HEK293 (cell line): ENCODE measurements at regions of chr5 and their contacts with region 1.

Region 1: DNA sequence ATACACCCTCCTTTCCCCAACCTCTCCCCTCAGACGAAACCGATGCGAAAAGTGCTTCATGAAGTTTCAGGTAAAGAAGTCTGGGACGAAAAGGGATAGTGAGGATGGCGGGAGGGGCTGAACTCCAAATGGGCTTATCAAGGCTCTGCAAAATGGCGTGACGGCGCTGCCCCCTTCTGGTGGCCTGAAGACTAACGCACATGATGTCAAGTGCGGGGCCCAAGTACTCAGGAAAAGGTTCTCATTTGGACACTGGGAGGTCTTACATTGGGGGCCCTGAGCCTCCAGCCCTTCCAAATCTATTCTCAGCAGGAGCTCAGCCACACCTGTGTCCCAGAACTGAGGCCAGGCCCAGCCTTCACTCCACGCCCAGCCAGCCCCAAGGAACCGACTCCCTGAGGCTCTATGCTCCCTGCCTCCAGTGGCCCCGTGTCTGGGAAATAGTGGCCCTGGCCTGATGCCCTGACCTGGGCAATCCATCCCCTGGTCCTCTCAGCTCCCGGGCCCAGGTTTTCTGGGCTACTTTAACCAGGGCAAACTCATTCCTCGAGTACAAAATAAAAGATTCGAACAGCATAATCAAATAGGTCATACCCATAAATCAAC is 119.9 kb downstream of the KCNIP1 start:
- H3K4me3 ChIP-seq: no peak overlapping the region
- H3K27ac ChIP-seq: no peak overlapping the region
- H3K4me1 ChIP-seq: no peaks in the 10 kb centered on the region
- CTCF ChIP-seq: peak; percentile 43; the same call in 1 of the 2 replicates

Region 2: GRCh38 chr5:170427672-170428236 is 195.9 kb before region 1 on chr5:
- CTCF ChIA-PET with region 1: interaction called, 85 read pairs
- POLR2A ChIA-PET with region 1: no interaction called
- H3K4me3 ChIP-seq: no peak overlapping the region
- H3K27ac ChIP-seq: no peak overlapping the region
- H3K4me1 ChIP-seq: 0 out of 2 replicates have a peak, but pooled peaks cover 4% of the 10 kb centered on the region
- CTCF ChIP-seq: no peak

Region 3: DNA sequence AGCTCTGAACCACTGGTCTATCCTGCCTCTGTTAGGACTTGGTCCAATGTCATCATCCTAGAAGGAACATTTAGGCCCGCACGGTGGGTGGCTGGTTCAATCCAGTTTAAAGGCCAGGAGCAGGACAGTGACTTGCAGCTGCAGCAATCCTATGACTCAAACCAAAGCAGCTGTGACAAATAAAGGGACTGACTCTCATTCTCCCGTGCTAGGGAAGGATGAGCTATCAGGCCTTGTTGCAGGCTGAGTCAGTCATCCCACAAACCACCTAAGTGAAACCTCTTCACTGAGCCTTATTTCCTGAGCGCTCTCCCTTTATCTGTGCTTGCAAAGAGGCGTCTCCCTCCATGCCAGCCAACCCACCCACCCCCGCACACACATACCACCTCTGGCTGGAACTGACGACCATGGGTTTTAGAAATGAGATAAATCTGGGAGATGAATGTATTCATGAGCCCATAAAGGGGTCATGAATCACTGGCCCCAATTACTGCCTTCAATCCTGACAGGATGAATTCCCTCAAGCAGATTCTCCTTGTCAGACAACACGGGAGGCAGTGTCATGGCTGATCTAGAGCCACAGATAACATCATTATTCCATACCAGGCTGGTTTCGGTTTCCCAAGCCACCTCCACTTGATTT is 26.4 kb before region 1 on chr5:
- CTCF ChIA-PET with region 1: interaction called, 13 read pairs
- POLR2A ChIA-PET with region 1: no interaction called
- H3K4me3 ChIP-seq: no peak overlapping the region
- H3K27ac ChIP-seq: no peak overlapping the region
- H3K4me1 ChIP-seq: 0 out of 2 replicates have a peak, but pooled peaks cover 6% of the 10 kb centered on the region
- CTCF ChIP-seq: no peak